Heart right ventricle (tissue), 16 donors: ENCODE measurements at regions of chr14 and their contacts with region 1.

Region 1: GRCh38 chr14:103847451-103848188 is at the start of gene PPP1R13B:
- DNase-seq: peak; percentile 93 to 97
- ATAC-seq: peak; percentile 93 to 98 (median 96)
- H3K4me3 ChIP-seq: peak within 1 kb of the TSS; percentile 71 to 93 (median 82)
- H3K27ac ChIP-seq: peak within 1 kb of the TSS; percentile 63 to 95 (median 92)
- H3K4me1 ChIP-seq: peaks cover 3 to 51% (median 26%) of the 10 kb centered on the region in 9 donors
- H3K27me3 ChIP-seq: peaks cover 0 to 34% (median 0%) of the 10 kb centered on the region in 7 donors
- CTCF ChIP-seq: no peak
- total RNA-seq, gene PPP1R13B: 64.8 to 124 (median 77.0) TPM

Region 2: GRCh38 chr14:103057365-103058096 is 790.1 kb before region 1 on chr14 and contains the start of gene CDC42BPB:
- intact Hi-C with region 1: loop called in 1 of 10 experiments (anchors 10 kb)
- DNase-seq: peak; percentile 89 to 91
- ATAC-seq: peak; percentile 89 to 96 (median 94)
- H3K4me3 ChIP-seq: peak within 1 kb of the TSS; percentile 85 to 100 (median 98)
- H3K27ac ChIP-seq: peak within 1 kb of the TSS; percentile 95 to 100 (median 97)
- H3K4me1 ChIP-seq: peaks cover 12 to 55% (median 45%) of the 10 kb centered on the region in 9 donors
- H3K27me3 ChIP-seq: peaks cover 0 to 30% (median 0%) of the 10 kb centered on the region in 7 donors
- CTCF ChIP-seq: no peak
- total RNA-seq, gene CDC42BPB: 60.8 to 83.6 (median 70.1) TPM

Region 3: DNA sequence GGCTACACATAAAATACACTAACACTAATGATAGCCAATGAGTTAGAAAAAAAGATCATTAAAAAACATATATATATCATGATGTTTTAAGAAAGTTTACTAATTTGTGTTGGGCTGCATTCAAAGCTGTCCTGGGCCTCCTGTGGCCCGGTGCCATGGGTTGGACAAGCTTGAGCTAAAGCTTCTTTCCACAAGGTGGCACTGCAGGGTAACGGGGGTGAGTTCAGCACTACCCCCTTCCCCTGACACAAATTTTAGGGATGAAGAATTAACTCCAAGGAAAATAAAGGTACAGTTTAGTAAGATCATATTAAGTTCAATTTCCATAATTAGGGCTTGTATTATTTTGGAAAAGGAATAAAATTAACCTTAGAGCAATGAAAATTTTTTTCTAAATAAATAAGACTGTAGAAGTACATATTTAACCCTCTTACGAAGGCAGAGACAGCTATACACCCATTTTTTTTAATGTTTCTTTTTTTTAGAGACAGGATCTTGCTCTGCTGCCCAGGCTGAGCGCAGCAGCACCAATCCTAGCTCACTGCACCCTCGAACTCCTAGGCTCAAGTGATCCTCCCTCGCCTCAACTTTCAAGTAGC is 39.1 kb before region 1 on chr14:
- intact Hi-C with region 1: loop called in 3 of 10 experiments (anchors 5 kb)
- DNase-seq: peak; percentile 66 to 82
- ATAC-seq: peak; percentile 76 to 89 (median 85)
- H3K4me3 ChIP-seq: no peak overlapping the region
- H3K27ac ChIP-seq: peak overlapping the region in 3 of 10 donors; percentile 5 to 42 (median 11)
- H3K4me1 ChIP-seq: peaks cover 6 to 72% (median 43%) of the 10 kb centered on the region in 9 donors
- H3K27me3 ChIP-seq: no peaks in the 10 kb centered on the region
- CTCF ChIP-seq: peak; percentile 71 to 93 (median 91)

Region 4: GRCh38 chr14:103819503-103820307 is 27.9 kb before region 1 on chr14:
- intact Hi-C with region 1: loop called in 2 of 10 experiments (anchors 1 to 5 kb)
- DNase-seq: peak; percentile 36 to 79
- ATAC-seq: peak; percentile 66 to 91 (median 84)
- H3K4me3 ChIP-seq: peak overlapping the region in 6 of 10 donors; percentile 3 to 15 (median 8)
- H3K27ac ChIP-seq: peak overlapping the region; percentile 12 to 85 (median 73)
- H3K4me1 ChIP-seq: peaks cover 12 to 79% (median 59%) of the 10 kb centered on the region in 9 donors
- H3K27me3 ChIP-seq: peaks cover 0 to 13% (median 0%) of the 10 kb centered on the region in 7 donors
- CTCF ChIP-seq: no peak

Region 5: GRCh38 chr14:103880348-103881267 is 33.0 kb after region 1 on chr14:
- intact Hi-C with region 1: loop called in 1 of 10 experiments (anchors 5 kb)
- DNase-seq: peak; percentile 70 to 86
- ATAC-seq: peak; percentile 34 to 68 (median 58)
- H3K4me3 ChIP-seq: peak overlapping the region in 7 of 10 donors; percentile 5 to 39 (median 26)
- H3K27ac ChIP-seq: peak overlapping the region; percentile 26 to 93 (median 76)
- H3K4me1 ChIP-seq: peaks cover 29 to 44% (median 40%) of the 10 kb centered on the region in 9 donors
- H3K27me3 ChIP-seq: peaks cover 0 to 30% (median 0%) of the 10 kb centered on the region in 7 donors
- CTCF ChIP-seq: no peak

Region 6: DNA sequence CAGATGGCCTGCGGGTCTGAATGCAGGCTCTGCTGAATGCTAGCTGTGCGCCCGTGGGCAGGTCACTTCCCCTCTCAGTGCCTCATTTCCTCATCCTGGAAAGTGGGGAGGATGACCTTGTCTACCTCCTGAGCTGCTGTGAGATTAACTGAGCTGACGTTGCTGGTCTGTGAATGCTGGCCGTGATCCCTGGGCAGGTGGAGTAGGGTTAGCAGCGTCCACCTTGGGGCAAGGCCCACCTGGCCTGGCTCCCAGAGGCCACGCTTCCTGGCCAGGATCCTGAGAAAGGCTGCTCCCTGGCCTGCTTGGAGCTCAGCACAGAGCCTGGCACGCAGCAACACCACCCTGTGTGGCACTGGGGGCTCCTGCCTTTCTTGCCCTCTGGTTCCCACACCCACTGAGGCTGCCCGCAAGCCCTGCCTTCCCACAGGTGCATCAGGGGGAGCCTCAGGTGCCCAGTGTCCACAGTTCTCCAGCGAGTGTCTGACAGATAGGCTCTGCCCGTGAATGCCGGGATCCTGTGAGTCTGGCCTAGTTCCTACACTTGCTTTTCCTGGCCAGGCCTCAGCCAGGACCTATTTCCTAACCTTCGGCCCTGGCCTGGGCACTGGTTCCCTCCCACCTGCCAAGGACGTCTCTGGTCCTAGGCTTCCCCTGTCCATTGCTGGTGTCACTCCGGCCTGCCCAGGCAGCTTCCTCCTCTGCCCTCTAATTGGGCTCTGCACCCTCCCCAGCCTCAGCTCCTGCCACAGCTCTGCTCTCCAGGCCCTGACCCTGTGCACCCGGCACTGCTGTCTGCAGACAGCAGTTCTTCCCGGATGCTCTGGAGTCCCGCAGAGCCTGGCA is 43.4 kb after region 1 on chr14:
- intact Hi-C with region 1: no loop called
- DNase-seq: no peak
- ATAC-seq: peak in 5 of 8 donors; percentile 7 to 57 (median 26)
- H3K4me3 ChIP-seq: no peak overlapping the region
- H3K27ac ChIP-seq: peak overlapping the region in 5 of 10 donors; percentile 26 to 45 (median 30)
- H3K4me1 ChIP-seq: peaks cover 8 to 37% (median 23%) of the 10 kb centered on the region in 9 donors
- H3K27me3 ChIP-seq: no peaks in the 10 kb centered on the region
- CTCF ChIP-seq: no peak

Region 7: GRCh38 chr14:103910262-103910935 is 62.8 kb after region 1 on chr14:
- intact Hi-C with region 1: loop called in 1 of 10 experiments (anchors 5 kb)
- DNase-seq: peak; percentile 71 to 82
- ATAC-seq: peak; percentile 83 to 97 (median 95)
- H3K4me3 ChIP-seq: peak overlapping the region in 4 of 10 donors; percentile 19 to 34 (median 23)
- H3K27ac ChIP-seq: peak overlapping the region in 6 of 10 donors; percentile 4 to 53 (median 38)
- H3K4me1 ChIP-seq: peaks cover 0 to 14% (median 12%) of the 10 kb centered on the region in 9 donors
- H3K27me3 ChIP-seq: no peaks in the 10 kb centered on the region
- CTCF ChIP-seq: peak; percentile 76 to 91 (median 81)